CD4-positive, alpha-beta T cell (primary cell): ENCODE measurements at regions of chr1 and their contacts with region 1.

Region 1: DNA sequence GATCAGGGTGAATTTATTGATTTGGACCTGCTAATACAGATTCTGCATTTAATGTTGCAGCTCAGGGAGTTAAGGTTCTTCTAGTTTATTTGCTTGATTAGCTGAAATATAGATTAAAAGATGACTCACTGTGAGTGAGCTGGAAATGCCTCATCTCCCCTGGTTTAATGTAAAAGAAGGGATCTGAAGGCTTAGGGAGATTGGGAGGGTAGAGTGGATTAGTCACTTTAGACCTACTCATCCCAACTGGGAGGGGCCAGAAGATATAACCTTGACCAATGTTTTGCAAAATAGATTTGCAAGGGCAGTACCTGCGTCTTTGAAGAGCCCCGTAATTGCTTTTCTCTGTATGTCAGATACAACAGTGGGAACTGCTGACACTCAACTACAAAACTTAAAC is 922.8 kb upstream of the ADGRL4 start:
- DNase-seq: no peak
- ATAC-seq: no peak
- H3K4me3 ChIP-seq: no peak overlapping the region
- H3K4me3 Mint-ChIP-seq: no peak overlapping the region
- H3K27ac ChIP-seq: no peak overlapping the region
- H3K27ac Mint-ChIP-seq: no peak overlapping the region
- H3K4me1 ChIP-seq: no peaks in the 10 kb centered on the region
- H3K4me1 Mint-ChIP-seq: no peaks in the 10 kb centered on the region
- H3K27me3 ChIP-seq: no peaks in the 10 kb centered on the region
- H3K27me3 Mint-ChIP-seq: no peaks in the 10 kb centered on the region
- CTCF ChIP-seq: no peak

Region 2: DNA sequence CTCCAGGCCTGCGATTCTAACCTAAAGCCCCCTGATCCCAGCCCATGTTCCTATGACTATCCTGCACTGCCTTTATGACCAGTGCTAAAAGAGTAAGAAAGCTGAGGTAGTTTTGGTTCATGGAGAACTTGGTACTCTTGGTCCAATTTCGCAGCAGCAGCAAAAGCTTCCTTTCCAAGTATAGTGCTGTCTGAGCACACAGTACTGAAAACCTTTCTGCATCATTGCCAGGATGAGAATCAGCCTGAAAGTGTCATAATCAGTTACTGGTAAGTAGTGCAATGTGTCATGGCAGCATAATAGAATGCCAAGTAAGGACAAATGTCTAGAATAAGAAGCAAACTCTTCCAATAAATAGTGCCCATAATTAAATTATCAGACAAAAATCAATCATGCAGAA is 33.2 kb before region 1 on chr1:
- CTCF ChIA-PET with region 1: no interaction called
- POLR2A ChIA-PET with region 1: no interaction called
- intact Hi-C with region 1: loop called in 1 of 2 experiments (anchors 1 kb)
- DNase-seq: no peak
- ATAC-seq: no peak
- H3K4me3 ChIP-seq: no peak overlapping the region
- H3K4me3 Mint-ChIP-seq: no peak overlapping the region
- H3K27ac ChIP-seq: no peak overlapping the region
- H3K27ac Mint-ChIP-seq: no peak overlapping the region
- H3K4me1 ChIP-seq: no peaks in the 10 kb centered on the region
- H3K4me1 Mint-ChIP-seq: no peaks in the 10 kb centered on the region
- H3K27me3 ChIP-seq: no peaks in the 10 kb centered on the region
- H3K27me3 Mint-ChIP-seq: no peaks in the 10 kb centered on the region
- CTCF ChIP-seq: no peak

Region 3: DNA sequence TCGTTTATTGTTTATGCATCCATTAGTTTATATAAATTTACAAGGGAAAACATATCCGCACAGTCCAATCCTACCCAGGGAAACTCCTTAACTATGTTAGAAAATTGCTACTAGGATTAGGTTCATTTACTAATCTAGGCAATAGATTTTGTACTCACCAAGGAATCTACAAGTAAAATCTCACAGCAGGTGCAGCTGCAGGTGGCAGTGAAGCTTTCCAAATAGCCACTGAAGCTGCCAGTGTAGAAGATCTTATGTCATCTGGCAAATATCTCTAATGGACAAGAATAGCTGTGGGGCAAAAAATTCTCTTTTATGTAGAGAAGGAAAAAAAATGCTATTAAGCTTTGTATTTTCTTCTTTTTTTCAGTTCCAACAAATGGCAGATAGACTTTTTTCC is 40.5 kb after region 1 on chr1:
- CTCF ChIA-PET with region 1: no interaction called
- POLR2A ChIA-PET with region 1: no interaction called
- intact Hi-C with region 1: no loop called
- DNase-seq: no peak
- ATAC-seq: no peak
- H3K4me3 ChIP-seq: no peak overlapping the region
- H3K4me3 Mint-ChIP-seq: no peak overlapping the region
- H3K27ac ChIP-seq: no peak overlapping the region
- H3K27ac Mint-ChIP-seq: no peak overlapping the region
- H3K4me1 ChIP-seq: no peaks in the 10 kb centered on the region
- H3K4me1 Mint-ChIP-seq: no peaks in the 10 kb centered on the region
- H3K27me3 ChIP-seq: no peaks in the 10 kb centered on the region
- H3K27me3 Mint-ChIP-seq: no peaks in the 10 kb centered on the region
- CTCF ChIP-seq: no peak